ENCODE measurements at regions of chr9 and their contacts with region 1.

Region 1: GRCh38 chr9:86354011-86354817 is at the start of gene TUT7:
- DNase-seq: peak; percentile 92 to 93 (median 92)
- H3K4me3 ChIP-seq: peak within 1 kb of the TSS; percentile 90 to 99 (median 98)
- H3K4me3 Mint-ChIP-seq: peak within 1 kb of the TSS; percentile 99 to 100
- H3K27ac ChIP-seq: peak within 1 kb of the TSS; percentile 91 to 95
- H3K27ac Mint-ChIP-seq: peak within 1 kb of the TSS; percentile 95 to 99 (median 97)
- H3K4me1 ChIP-seq: peaks cover 58 to 71% of the 10 kb centered on the region in 2 donors
- H3K4me1 Mint-ChIP-seq: peaks cover 55% of the 10 kb centered on the region
- H3K27me3 ChIP-seq: no peaks in the 10 kb centered on the region
- H3K27me3 Mint-ChIP-seq: peaks cover 0 to 2% (median 0%) of the 10 kb centered on the region in 3 donors
- CTCF ChIP-seq: no peak
- polyA plus RNA-seq, gene TUT7: 14.2 to 51.6 (median 27.9) TPM

Region 2: DNA sequence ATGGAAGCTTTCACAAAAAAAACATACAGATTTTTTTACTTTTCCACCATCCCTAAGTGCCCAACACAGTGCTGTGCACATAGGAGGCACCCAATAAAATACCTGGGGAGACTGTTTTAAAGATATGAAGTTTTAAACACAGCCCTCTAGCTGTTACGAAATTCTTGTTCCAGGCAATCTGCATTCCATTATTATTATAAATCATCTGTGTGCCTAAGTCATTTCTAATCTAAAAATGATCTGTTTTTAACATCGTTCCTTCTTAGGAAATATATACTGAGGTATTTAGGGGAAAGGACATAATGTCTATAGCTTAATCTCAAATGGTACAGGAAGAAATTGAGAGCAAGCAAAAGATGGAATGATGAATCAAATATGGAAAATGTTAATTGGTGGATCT is 39.1 kb before region 1 on chr9:
- intact Hi-C with region 1: no loop called
- DNase-seq: no peak
- H3K4me3 ChIP-seq: no peak overlapping the region
- H3K4me3 Mint-ChIP-seq: no peak overlapping the region
- H3K27ac ChIP-seq: no peak overlapping the region
- H3K27ac Mint-ChIP-seq: no peak overlapping the region
- H3K4me1 ChIP-seq: no peaks in the 10 kb centered on the region
- H3K4me1 Mint-ChIP-seq: no peaks in the 10 kb centered on the region
- H3K27me3 ChIP-seq: no peaks in the 10 kb centered on the region
- H3K27me3 Mint-ChIP-seq: no peaks in the 10 kb centered on the region
- CTCF ChIP-seq: no peak

Region 3: DNA sequence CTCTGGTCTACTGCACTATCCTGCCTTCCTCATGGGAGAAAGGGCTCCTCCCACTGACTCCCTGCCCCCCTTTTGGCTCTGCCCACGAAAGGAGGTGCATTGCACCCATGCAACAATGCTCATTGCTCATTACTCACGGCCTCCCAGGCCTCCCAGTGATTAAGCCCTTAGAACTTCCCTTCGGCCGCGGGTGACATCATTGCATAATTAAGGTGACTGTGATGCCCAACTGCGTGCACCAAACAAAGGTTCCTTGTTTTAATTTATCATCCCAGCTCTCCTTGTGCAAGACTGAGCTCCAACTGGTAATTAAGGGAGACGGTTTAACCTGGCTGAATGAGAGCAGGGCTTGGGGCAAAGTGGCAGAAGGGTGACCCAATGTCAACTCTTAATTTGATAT is 412.7 kb after region 1 on chr9:
- intact Hi-C with region 1: loop called in 1 of 2 experiments (anchors 10 kb)
- DNase-seq: peak; percentile 94 to 99 (median 97)
- H3K4me3 ChIP-seq: peak overlapping the region in 1 of 3 experiments; percentile 54
- H3K4me3 Mint-ChIP-seq: peak overlapping the region in 1 of 2 donors; percentile 71
- H3K27ac ChIP-seq: peak overlapping the region; percentile 94 to 96
- H3K27ac Mint-ChIP-seq: peak overlapping the region in 1 of 7 donors; percentile 97
- H3K4me1 ChIP-seq: peaks cover 56 to 57% of the 10 kb centered on the region in 2 donors
- H3K4me1 Mint-ChIP-seq: peaks cover 1% of the 10 kb centered on the region
- H3K27me3 ChIP-seq: no peaks in the 10 kb centered on the region
- H3K27me3 Mint-ChIP-seq: peaks cover 0 to 10% (median 4%) of the 10 kb centered on the region in 3 donors
- CTCF ChIP-seq: no peak